CD8-positive, alpha-beta memory T cell (primary cell): ENCODE measurements at regions of chr3 and their contacts with region 1.

Region 1: DNA sequence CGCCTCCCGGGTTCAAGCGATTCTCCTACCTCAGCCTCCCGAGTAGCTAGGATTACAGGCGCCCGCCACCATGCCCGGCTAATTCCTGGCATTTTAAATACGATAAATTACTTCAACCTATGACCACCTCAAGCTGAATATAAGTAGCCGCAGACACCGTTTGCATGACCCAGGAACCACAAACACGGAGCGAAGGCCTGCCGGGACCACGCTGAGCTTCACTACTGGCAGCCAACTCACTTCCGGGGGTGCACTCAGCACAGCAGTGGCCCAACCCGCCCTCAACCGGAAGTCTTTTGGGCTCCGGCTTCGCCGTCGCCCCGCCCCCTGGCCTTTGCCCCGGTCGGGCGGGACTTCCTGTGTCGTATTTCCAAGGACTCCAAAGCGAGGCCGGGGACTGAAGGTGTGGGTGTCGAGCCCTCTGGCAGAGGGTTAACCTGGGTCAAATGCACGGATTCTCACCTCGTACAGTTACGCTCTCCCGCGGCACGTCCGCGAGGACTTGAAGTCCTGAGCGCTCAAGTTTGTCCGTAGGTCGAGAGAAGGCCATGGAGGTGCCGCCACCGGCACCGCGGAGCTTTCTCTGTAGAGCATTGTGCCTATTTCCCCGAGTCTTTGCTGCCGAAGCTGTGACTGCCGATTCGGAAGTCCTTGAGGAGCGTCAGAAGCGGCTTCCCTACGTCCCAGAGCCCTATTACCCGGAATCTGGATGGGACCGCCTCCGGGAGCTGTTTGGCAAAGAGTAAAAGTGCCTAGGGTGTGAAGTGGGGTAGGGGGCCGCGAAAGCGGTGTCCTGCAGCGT is at the start of gene TIMMDC1:
- DNase-seq: peak; percentile 95 to 98 (median 96)
- H3K4me3 ChIP-seq: peak within 1 kb of the TSS; percentile 97
- H3K4me3 Mint-ChIP-seq: peak within 1 kb of the TSS; percentile 98 to 100 (median 99)
- H3K27ac ChIP-seq: peak within 1 kb of the TSS; percentile 96
- H3K27ac Mint-ChIP-seq: peak within 1 kb of the TSS; percentile 96 to 100 (median 100)
- H3K4me1 ChIP-seq: peaks cover 30% of the 10 kb centered on the region
- H3K4me1 Mint-ChIP-seq: peaks cover 28 to 45% (median 41%) of the 10 kb centered on the region in 3 donors
- H3K27me3 ChIP-seq: no peaks in the 10 kb centered on the region
- H3K27me3 Mint-ChIP-seq: no peaks in the 10 kb centered on the region
- total RNA-seq, gene TIMMDC1: 152 to 158 TPM

Region 2: GRCh38 chr3:119463171-119464169 is 34.9 kb before region 1 on chr3 and contains the start of gene TMEM39A:
- CTCF ChIA-PET with region 1: interaction called, 18 read pairs
- POLR2A ChIA-PET with region 1: interaction called, 67 read pairs
- DNase-seq: peak; percentile 99
- H3K4me3 ChIP-seq: peak within 1 kb of the TSS; percentile 97
- H3K4me3 Mint-ChIP-seq: peak within 1 kb of the TSS; percentile 80 to 94 (median 89)
- H3K27ac ChIP-seq: peak within 1 kb of the TSS; percentile 91
- H3K27ac Mint-ChIP-seq: peak within 1 kb of the TSS; percentile 95 to 99 (median 98)
- H3K4me1 ChIP-seq: peaks cover 31% of the 10 kb centered on the region
- H3K4me1 Mint-ChIP-seq: peaks cover 30 to 66% (median 54%) of the 10 kb centered on the region in 3 donors
- H3K27me3 ChIP-seq: no peaks in the 10 kb centered on the region
- H3K27me3 Mint-ChIP-seq: peaks cover 0 to 4% of the 10 kb centered on the region in 2 donors
- total RNA-seq, gene TMEM39A: 44.4 to 45.3 TPM

Region 3: GRCh38 chr3:119469381-119470189 is 28.8 kb before region 1 on chr3:
- CTCF ChIA-PET with region 1: interaction called, 18 read pairs
- POLR2A ChIA-PET with region 1: interaction called, 67 read pairs
- DNase-seq: peak in 1 of 5 donors; percentile 28
- H3K4me3 ChIP-seq: peak overlapping the region; percentile 95
- H3K4me3 Mint-ChIP-seq: peak overlapping the region; percentile 92 to 97 (median 95)
- H3K27ac ChIP-seq: peak overlapping the region; percentile 88
- H3K27ac Mint-ChIP-seq: peak overlapping the region; percentile 83 to 97 (median 92)
- H3K4me1 ChIP-seq: peaks cover 26% of the 10 kb centered on the region
- H3K4me1 Mint-ChIP-seq: peaks cover 28 to 44% (median 36%) of the 10 kb centered on the region in 3 donors
- H3K27me3 ChIP-seq: no peaks in the 10 kb centered on the region
- H3K27me3 Mint-ChIP-seq: no peaks in the 10 kb centered on the region

Region 4: GRCh38 chr3:119676771-119677640 is 178.6 kb after region 1 on chr3 and contains the start of gene COX17:
- CTCF ChIA-PET with region 1: interaction called, 4 read pairs
- POLR2A ChIA-PET with region 1: interaction called, 10 read pairs
- DNase-seq: peak; percentile 94 to 99 (median 95)
- H3K4me3 ChIP-seq: peak within 1 kb of the TSS; percentile 78
- H3K4me3 Mint-ChIP-seq: peak within 1 kb of the TSS; percentile 82 to 97 (median 85)
- H3K27ac ChIP-seq: peak within 1 kb of the TSS; percentile 76
- H3K27ac Mint-ChIP-seq: peak within 1 kb of the TSS; percentile 90 to 99 (median 96)
- H3K4me1 ChIP-seq: peaks cover 16% of the 10 kb centered on the region
- H3K4me1 Mint-ChIP-seq: peaks cover 38 to 45% (median 41%) of the 10 kb centered on the region in 3 donors
- H3K27me3 ChIP-seq: no peaks in the 10 kb centered on the region
- H3K27me3 Mint-ChIP-seq: no peaks in the 10 kb centered on the region
- total RNA-seq, gene COX17: 105 to 108 TPM